Body of pancreas (tissue), 4 donors: ENCODE measurements at regions of chr17 and their contacts with region 1.

Region 1: DNA sequence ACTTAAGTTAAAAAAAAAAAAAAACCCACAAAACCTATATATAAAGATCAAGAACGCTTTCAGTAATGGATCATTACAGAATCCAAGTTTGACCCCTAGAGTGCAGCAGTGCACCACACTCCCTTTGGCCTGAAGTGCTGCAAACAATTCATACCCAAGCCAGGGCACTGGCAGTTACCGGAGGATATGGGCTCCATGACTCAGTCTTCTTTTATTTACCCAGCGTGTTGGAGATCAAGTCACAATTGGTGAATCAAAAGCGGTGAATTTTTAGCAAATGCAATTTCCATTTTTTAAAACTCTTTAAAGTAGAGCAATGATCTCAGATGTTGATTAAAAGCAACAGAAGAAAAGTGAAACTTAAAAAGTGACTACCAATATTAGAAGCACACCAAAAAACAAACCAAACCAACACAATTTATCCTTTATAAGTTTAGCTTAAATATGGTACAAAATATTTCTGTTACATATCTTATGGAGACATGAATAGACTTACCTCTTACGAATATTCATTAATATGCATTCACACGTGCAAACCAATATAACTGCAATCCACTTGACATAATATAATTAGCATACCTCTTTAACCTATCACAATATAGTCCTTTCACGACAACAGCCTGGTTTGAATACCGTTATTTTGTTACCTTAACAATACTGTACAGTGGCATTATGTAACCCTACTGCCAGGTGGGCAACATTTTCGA is 46.3 kb downstream of the ZNF652 start:
- DNase-seq: peak; percentile 78 to 87 (median 82)
- ATAC-seq: peak; percentile 98
- H3K4me3 ChIP-seq: no peak overlapping the region
- H3K27ac ChIP-seq: peak overlapping the region in 1 of 4 donors; percentile 47
- H3K4me1 ChIP-seq: peaks cover 9% of the 10 kb centered on the region
- H3K27me3 ChIP-seq: no peaks in the 10 kb centered on the region
- CTCF ChIP-seq: peak; percentile 76 to 94 (median 88)
- POLR2A ChIP-seq: no peak

Region 2: GRCh38 chr17:49393491-49394255 is 78.0 kb after region 1 on chr17:
- intact Hi-C with region 1: loop called (anchors 2 kb)
- DNase-seq: peak in 1 of 4 donors; percentile 23
- ATAC-seq: no peak
- H3K4me3 ChIP-seq: no peak overlapping the region
- H3K27ac ChIP-seq: no peak overlapping the region
- H3K4me1 ChIP-seq: peaks cover 4% of the 10 kb centered on the region
- H3K27me3 ChIP-seq: no peaks in the 10 kb centered on the region
- CTCF ChIP-seq: no peak
- POLR2A ChIP-seq: no peak